ENCODE measurements at regions of chr9 and their contacts with region 1.

Region 1: DNA sequence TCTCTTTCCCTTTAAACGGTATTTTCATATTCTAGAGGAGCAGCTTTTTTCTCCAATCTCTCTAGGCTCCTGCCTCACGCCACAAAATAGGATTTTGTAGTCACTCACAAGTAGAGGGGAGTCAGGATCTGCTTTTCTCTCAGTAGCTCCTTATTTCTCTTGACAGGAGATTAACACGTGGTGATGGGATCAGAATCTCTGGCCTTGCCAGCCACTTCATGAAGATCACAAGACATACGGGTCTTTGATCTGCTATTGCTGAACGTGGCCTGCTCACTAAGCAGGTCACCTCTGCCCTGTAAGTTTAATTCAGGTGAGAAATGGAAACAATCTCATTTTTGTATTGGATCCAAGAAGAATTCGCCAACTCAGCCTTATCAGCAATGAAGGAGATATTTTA is 257.5 kb downstream of the DIRAS2 start:
- DNase-seq: no peak
- H3K27ac ChIP-seq: no peak overlapping the region
- CTCF ChIP-seq: no peak

Region 2: GRCh38 chr9:90569511-90569910 is 184.4 kb after region 1 on chr9:
- CTCF ChIA-PET with region 1: no interaction called
- POLR2A ChIA-PET with region 1: interaction called, 10 read pairs
- DNase-seq: no peak
- H3K27ac ChIP-seq: no peak overlapping the region
- CTCF ChIP-seq: no peak

Region 3: GRCh38 chr9:90642570-90643539 is 257.7 kb after region 1 on chr9 and contains the start of gene DIRAS2:
- CTCF ChIA-PET with region 1: no interaction called
- POLR2A ChIA-PET with region 1: no interaction called
- DNase-seq: peak; percentile 62
- H3K27ac ChIP-seq: no peak within 1 kb of the TSS
- CTCF ChIP-seq: peak; percentile 67

Region 4: DNA sequence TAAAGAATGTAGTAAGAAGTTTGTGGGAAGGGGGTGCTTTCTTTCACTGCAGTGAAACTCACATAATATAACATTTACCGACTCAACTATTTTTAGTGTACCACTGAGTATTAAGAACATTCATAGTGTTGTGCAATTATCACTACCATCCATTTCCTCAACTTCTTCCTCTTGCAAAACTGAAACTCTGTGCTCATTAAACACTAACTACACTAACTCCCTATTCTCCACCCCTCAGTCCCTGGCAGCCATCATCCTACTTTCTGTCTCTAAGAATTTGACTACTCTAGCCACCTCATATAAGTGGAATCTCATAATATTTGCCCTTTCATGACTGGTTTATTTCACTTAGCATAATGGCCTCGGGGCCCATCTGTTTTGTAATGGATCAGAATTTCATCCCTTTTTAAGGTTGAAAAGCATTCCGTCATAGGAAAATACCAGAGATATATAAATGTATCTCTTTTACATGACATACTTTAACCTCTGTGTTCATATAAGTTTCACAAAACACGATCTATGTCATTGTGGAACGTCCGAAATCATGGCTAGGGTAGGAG is 313.8 kb after region 1 on chr9:
- CTCF ChIA-PET with region 1: no interaction called
- POLR2A ChIA-PET with region 1: no interaction called
- DNase-seq: no peak
- H3K27ac ChIP-seq: no peak overlapping the region
- CTCF ChIP-seq: no peak

Measured in RWPE1 (cell line).